ENCODE measurements at regions of chr5 and their contacts with region 1.

Region 1: DNA sequence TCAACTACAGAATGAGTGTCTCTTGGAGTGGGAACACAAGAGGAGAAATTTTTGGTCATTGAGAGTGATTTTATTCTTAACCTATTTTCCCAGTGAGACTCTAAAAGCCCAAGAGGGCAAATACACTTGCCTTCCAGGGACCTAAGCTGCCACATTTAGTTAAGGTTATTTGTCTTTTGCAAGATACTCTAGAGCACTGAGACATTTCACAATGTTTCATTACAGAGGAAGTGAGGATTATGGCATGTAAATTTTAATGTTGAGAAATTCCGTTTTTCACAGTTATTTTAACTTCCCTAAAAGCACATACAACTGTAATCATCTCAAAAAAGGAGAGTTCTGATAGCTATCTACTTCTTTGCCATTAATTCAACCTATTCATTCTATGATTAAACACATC is 38.7 kb upstream of the RAB3C start:
- DNase-seq: peak; percentile 75 to 94 (median 91)
- H3K4me3 ChIP-seq: peak overlapping the region in 2 of 3 experiments; percentile 25 to 55
- H3K4me3 Mint-ChIP-seq: peak overlapping the region in 1 of 2 donors; percentile 65
- H3K27ac ChIP-seq: peak overlapping the region; percentile 73 to 87
- H3K27ac Mint-ChIP-seq: peak overlapping the region; percentile 92 to 98 (median 93)
- H3K4me1 ChIP-seq: peaks cover 49 to 53% of the 10 kb centered on the region in 2 donors
- H3K4me1 Mint-ChIP-seq: peaks cover 57% of the 10 kb centered on the region
- H3K27me3 ChIP-seq: no peaks in the 10 kb centered on the region
- H3K27me3 Mint-ChIP-seq: no peaks in the 10 kb centered on the region
- CTCF ChIP-seq: no peak

Region 2: DNA sequence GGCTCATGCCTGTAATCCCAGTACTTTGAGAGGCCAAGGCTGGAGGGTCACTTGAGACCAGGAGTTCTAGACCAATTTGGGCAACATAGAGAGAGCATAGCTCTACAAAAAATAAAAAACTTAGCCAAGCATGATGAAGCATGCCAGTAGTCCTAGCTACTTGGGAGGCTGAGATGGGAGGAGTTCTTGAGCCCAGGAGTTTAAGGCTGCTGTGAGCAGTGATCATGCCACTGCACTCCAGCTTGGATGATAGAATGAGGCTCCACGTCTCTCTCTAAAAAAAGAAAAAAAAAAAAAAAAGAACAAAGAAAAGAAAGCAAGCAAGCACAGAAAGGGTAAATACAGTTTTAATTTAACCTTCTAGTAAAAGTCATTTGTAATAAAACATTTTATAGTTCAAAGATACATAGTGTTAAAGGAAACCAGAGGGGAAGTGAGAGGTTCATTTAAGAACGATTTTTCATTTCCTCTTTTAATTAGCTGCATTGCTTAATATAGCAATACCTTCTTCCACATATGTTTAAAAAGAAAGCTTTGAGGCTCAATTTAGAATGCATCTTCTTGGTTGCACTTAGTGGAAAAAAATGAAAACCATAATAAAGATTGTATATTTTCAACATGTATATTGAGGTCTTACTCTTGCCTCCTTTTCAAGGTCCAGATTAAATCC is 38.1 kb before region 1 on chr5:
- intact Hi-C with region 1: loop called in 1 of 2 experiments (anchors 5 kb)
- DNase-seq: peak; percentile 22 to 77 (median 37)
- H3K4me3 ChIP-seq: peak overlapping the region in 1 of 3 experiments; percentile 46
- H3K4me3 Mint-ChIP-seq: peak overlapping the region in 1 of 2 donors; percentile 67
- H3K27ac ChIP-seq: peak overlapping the region; percentile 63 to 65
- H3K27ac Mint-ChIP-seq: peak overlapping the region; percentile 69 to 91 (median 83)
- H3K4me1 ChIP-seq: peaks cover 59 to 66% of the 10 kb centered on the region in 2 donors
- H3K4me1 Mint-ChIP-seq: peaks cover 58% of the 10 kb centered on the region
- H3K27me3 ChIP-seq: no peaks in the 10 kb centered on the region
- H3K27me3 Mint-ChIP-seq: no peaks in the 10 kb centered on the region
- CTCF ChIP-seq: no peak